ENCODE measurements at regions of chr4 and their contacts with region 1.

Region 1: GRCh38 chr4:118835571-118836300 is at the start of gene SEC24D:
- DNase-seq: peak; percentile 66 to 95
- H3K4me3 ChIP-seq: peak within 1 kb of the TSS; percentile 63 to 70 (median 68)
- H3K27ac ChIP-seq: peak within 1 kb of the TSS; percentile 87
- H3K4me1 ChIP-seq: peaks cover 0 to 5% (median under 1%) of the 10 kb centered on the region in 4 experiments; a peak in 1 of 7 replicates
- H3K27me3 ChIP-seq: no peaks in the 10 kb centered on the region
- CTCF ChIP-seq: no peak
- EP300 ChIP-seq: no peak
- POLR2A ChIP-seq: peak; percentile 18 to 69; a peak in 2 of 3 replicates
- RAD21 ChIP-seq: no peak
- total RNA-seq, gene SEC24D: 84.6 and 91.6 TPM in 2 replicates

Region 2: GRCh38 chr4:118850488-118851173 is 14.9 kb after region 1 on chr4:
- CTCF ChIA-PET with region 1: interaction called, 18 read pairs
- POLR2A ChIA-PET with region 1: interaction called, 32 read pairs
- DNase-seq: no peak
- H3K4me3 ChIP-seq: peak overlapping the region; percentile 45 to 66 (median 50)
- H3K27ac ChIP-seq: peak overlapping the region; percentile 57; the same call in 1 of the 2 replicates
- H3K4me1 ChIP-seq: peaks cover 0 to 13% (median 9%) of the 10 kb centered on the region in 4 experiments; a peak in 5 of 7 replicates
- H3K27me3 ChIP-seq: no peaks in the 10 kb centered on the region
- CTCF ChIP-seq: no peak
- EP300 ChIP-seq: no peak
- POLR2A ChIP-seq: peak in 1 of 2 experiments; percentile 54; a peak in 2 of 3 replicates
- RAD21 ChIP-seq: no peak

Measured in H1 (cell line).